ENCODE measurements at regions of chr1 and their contacts with region 1.

Region 1: GRCh38 chr1:153922972-153923925 is at the start of gene GATAD2B:
- DNase-seq: peak; percentile 100
- ATAC-seq: peak; percentile 97 to 99 (median 98)
- H3K4me3 ChIP-seq: peak within 1 kb of the TSS; percentile 67 to 93 (median 72)
- H3K27ac ChIP-seq: peak within 1 kb of the TSS; percentile 82 to 94 (median 90)
- H3K4me1 ChIP-seq: peaks cover 10 to 51% (median 40%) of the 10 kb centered on the region in 9 donors
- H3K27me3 ChIP-seq: no peaks in the 10 kb centered on the region
- CTCF ChIP-seq: no peak
- total RNA-seq, gene GATAD2B: 32.9 to 52.6 (median 42.7) TPM

Region 2: GRCh38 chr1:153727463-153728304 is 195.6 kb before region 1 on chr1 and contains the start of gene INTS3:
- intact Hi-C with region 1: no loop called
- DNase-seq: peak; percentile 99 to 100
- ATAC-seq: peak; percentile 99 to 100 (median 100)
- H3K4me3 ChIP-seq: peak within 1 kb of the TSS; percentile 48 to 92 (median 78)
- H3K27ac ChIP-seq: peak within 1 kb of the TSS; percentile 96 to 100 (median 99)
- H3K4me1 ChIP-seq: peaks cover 0 to 36% (median 30%) of the 10 kb centered on the region in 9 donors
- H3K27me3 ChIP-seq: no peaks in the 10 kb centered on the region
- CTCF ChIP-seq: peak in 3 of 9 donors; percentile 8 to 22 (median 15)
- total RNA-seq, gene INTS3: 25.4 to 32.8 (median 31.1) TPM

Region 3: DNA sequence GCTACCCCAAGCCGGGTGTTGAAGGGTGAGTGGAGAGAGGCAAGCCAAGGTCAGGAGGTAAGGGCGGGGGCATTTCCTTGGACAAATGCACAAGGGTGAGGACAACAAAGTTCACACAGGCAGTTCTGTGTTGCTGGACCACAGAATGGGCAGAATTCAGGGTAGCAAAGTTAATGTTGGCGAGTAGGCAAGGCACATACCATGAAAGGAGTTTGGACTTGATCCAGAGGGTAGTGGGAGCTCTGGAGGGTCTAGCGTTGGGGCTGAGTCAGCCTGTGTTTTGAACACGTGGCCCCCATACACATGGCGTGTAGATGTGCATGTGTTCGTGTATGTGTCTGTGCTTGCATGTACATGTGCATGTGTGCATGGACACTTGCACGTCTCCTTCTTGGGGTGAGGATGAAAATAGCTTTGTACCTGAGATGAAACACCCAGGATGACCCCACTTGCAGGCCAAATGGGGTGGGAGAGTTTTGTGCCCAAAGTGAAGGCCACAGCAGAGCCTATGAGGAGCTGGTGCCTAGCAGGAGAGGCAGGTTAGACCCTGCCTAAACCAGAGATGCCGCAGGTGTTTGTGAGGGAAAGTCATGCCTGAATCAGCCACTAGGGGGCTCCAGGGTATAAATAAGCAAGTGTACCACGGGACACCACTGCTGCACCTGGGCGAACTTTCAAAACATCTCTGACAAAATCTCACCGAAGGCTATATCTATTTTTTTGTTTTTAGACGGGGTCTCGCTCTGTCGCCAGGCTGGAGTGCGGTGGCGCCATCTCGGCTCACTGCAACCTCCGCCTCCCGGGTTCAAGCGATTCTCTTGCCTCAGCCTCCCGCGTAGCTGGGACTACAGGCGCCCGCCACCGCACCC is 126.2 kb before region 1 on chr1:
- intact Hi-C with region 1: loop called in 1 of 10 experiments (anchors 5 kb)
- DNase-seq: peak; percentile 53 to 84
- ATAC-seq: peak in 7 of 8 donors; percentile 51 to 76 (median 69)
- H3K4me3 ChIP-seq: no peak overlapping the region
- H3K27ac ChIP-seq: no peak overlapping the region
- H3K4me1 ChIP-seq: peaks cover 0 to 15% (median 0%) of the 10 kb centered on the region in 9 donors
- H3K27me3 ChIP-seq: no peaks in the 10 kb centered on the region
- CTCF ChIP-seq: peak; percentile 83 to 96 (median 92)

Region 4: DNA sequence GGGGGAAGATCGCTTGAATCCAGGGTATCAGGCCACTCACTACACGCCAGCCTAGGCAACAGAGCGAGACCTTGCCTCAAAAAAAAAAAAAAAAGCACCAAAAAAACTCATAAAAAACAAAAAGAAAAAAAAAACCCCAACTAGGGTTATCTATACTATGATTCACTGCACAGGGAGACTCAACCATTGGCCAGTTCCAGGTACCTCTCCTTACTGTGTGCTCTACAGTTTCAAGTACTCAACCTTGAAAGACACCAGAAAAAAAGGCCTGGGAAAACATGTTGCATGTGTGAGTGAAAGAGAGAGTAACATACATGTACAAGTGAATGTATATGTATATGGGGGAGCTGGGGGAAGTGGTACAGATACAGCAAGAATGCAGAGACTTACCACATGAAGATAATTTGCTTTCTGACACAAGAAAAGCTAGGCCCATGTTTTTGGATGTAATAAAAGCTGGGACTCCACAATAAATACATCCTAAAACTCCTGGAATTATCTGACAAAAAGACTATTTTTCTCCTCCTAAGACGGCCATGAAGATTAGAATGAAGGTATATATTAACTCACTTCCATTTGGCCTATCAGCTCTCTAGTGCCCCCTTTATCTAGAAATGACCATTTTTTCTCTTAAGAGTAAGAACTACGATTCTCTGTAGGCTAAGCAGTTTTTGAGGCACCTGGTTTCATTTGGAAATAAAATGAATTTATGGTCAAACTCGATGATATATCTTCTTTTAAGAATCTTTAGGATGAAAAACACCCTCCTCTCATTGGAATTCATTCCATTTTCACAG is 95.9 kb before region 1 on chr1:
- intact Hi-C with region 1: loop called in 2 of 10 experiments (anchors 5 to 10 kb)
- DNase-seq: no peak
- ATAC-seq: no peak
- H3K4me3 ChIP-seq: no peak overlapping the region
- H3K27ac ChIP-seq: no peak overlapping the region
- H3K4me1 ChIP-seq: peaks cover 0 to 20% (median 8%) of the 10 kb centered on the region in 9 donors
- H3K27me3 ChIP-seq: no peaks in the 10 kb centered on the region
- CTCF ChIP-seq: no peak

Region 5: DNA sequence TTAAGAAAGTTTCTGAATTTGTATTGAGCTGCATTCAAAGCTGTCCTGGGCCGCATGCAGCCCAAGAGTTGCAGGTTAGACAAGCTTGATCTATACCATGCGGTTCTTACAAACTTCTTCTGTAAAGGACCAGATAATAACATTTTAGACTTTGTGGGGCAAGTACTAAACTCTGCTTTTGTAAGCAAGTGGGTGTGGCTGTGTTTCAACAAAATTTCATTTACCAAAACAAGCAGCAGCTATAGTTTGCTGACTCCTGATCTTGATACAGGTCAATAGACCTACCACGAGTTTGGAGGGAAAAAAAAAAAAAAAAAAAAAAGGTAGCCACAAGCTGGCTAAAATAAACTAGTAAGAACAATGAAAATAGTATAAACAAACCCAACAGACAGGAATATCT is 47.9 kb before region 1 on chr1:
- intact Hi-C with region 1: loop called in 2 of 10 experiments (anchors 5 kb)
- DNase-seq: no peak
- ATAC-seq: no peak
- H3K4me3 ChIP-seq: no peak overlapping the region
- H3K27ac ChIP-seq: no peak overlapping the region
- H3K4me1 ChIP-seq: peaks cover 0 to 34% (median 20%) of the 10 kb centered on the region in 9 donors
- H3K27me3 ChIP-seq: no peaks in the 10 kb centered on the region
- CTCF ChIP-seq: no peak

Region 6: DNA sequence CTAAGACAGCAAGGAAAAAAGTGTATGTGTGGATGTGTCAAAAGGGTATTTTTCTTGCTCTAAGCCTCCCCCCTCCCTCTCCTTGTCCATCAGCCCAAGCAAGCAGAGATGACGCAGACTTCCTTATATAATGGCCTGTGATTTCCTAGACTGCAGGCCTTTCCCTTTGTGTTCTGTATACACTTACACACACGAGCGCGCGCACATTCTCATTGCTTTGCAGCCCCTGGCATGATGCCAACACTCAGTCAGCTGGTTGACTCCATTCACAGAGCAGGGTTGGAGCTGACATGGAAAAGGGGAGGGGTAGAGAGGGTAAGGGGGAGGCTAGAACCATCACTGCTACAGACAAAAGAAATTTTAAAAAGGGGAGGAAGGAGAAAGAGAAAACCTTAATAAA is 42.3 kb before region 1 on chr1:
- intact Hi-C with region 1: loop called in 2 of 10 experiments (anchors 5 kb)
- DNase-seq: peak; percentile 81 to 94
- ATAC-seq: peak; percentile 95 to 99 (median 97)
- H3K4me3 ChIP-seq: peak overlapping the region in 6 of 10 donors; percentile 12 to 36 (median 28)
- H3K27ac ChIP-seq: peak overlapping the region in 8 of 10 donors; percentile 44 to 64 (median 58)
- H3K4me1 ChIP-seq: peaks cover 5 to 47% (median 37%) of the 10 kb centered on the region in 9 donors
- H3K27me3 ChIP-seq: no peaks in the 10 kb centered on the region
- CTCF ChIP-seq: no peak

Region 7: DNA sequence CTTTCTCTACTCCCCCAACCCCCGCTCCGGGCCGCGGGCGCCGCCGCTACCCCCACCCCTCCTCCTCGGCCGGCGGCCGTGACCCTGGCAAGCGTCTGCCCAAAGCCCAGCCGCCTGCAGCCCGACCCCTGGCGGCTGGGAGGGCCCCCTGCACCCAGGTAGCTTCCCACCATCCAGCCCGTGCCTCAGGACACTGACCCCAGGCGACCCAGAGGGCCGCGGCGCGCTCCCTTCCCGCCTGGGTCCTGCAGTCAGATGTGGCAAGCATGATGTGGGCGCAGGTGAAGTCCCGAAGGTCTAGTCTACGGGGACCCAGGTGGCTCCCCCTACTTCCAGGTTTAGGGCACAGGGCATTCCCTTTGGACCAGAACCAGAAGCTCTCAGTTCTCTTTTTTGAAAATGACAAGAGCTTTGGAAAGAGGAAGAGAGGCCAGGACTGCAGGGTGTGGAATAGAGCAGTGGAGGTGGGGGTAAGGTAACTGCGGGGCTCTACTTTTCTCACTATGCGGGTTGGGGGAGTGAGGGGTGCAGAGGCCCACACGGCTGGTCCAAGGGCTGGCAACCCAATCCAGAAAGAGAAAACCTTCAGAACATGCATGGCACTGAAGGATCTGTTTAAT is 23.5 kb after region 1 on chr1 and contains the start of gene DENND4B:
- intact Hi-C with region 1: loop called in 3 of 10 experiments (anchors 2 kb)
- DNase-seq: peak; percentile 83 to 87
- ATAC-seq: peak; percentile 73 to 86 (median 78)
- H3K4me3 ChIP-seq: peak within 1 kb of the TSS; percentile 65 to 99 (median 91)
- H3K27ac ChIP-seq: peak within 1 kb of the TSS; percentile 97 to 100 (median 100)
- H3K4me1 ChIP-seq: peaks cover 5 to 44% (median 30%) of the 10 kb centered on the region in 9 donors
- H3K27me3 ChIP-seq: no peaks in the 10 kb centered on the region
- CTCF ChIP-seq: peak; percentile 89 to 98 (median 94)
- total RNA-seq, gene DENND4B: 29.4 to 60.4 (median 39.0) TPM

Region 8: GRCh38 chr1:153984123-153984894 is 61.1 kb after region 1 on chr1:
- intact Hi-C with region 1: loop called in 1 of 10 experiments (anchors 5 kb)
- DNase-seq: no peak
- ATAC-seq: no peak
- H3K4me3 ChIP-seq: peak overlapping the region in 5 of 10 donors; percentile 53 to 71 (median 64)
- H3K27ac ChIP-seq: peak overlapping the region in 7 of 10 donors; percentile 74 to 91 (median 89)
- H3K4me1 ChIP-seq: peaks cover 8 to 43% (median 19%) of the 10 kb centered on the region in 9 donors
- H3K27me3 ChIP-seq: no peaks in the 10 kb centered on the region
- CTCF ChIP-seq: no peak

Region 9: GRCh38 chr1:154014154-154014910 is 91.1 kb after region 1 on chr1:
- intact Hi-C with region 1: no loop called
- DNase-seq: no peak
- ATAC-seq: no peak
- H3K4me3 ChIP-seq: no peak overlapping the region
- H3K27ac ChIP-seq: no peak overlapping the region
- H3K4me1 ChIP-seq: no peaks in the 10 kb centered on the region
- H3K27me3 ChIP-seq: no peaks in the 10 kb centered on the region
- CTCF ChIP-seq: no peak

Region 10: DNA sequence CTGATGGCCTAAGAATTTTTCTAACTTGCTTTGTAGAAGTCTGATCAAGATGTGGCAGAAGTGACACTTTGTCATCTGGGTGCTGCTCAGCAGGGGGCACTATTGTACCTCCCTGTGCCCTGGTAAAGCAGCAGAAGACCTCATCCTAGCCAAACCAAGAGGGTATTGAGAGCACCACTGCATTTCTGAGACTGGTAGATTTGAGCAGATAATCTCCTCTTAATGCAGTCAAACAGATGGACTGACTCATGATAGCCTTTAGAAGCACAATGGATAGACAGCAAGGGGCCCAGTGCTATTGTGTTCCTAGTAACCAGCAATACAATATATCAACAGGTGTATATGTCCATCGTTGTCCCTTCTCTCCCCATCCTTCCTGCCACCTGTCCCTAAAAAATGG is 262.9 kb after region 1 on chr1:
- intact Hi-C with region 1: no loop called
- DNase-seq: no peak
- ATAC-seq: no peak
- H3K4me3 ChIP-seq: no peak overlapping the region
- H3K27ac ChIP-seq: no peak overlapping the region
- H3K4me1 ChIP-seq: peaks cover 5 to 24% (median 15%) of the 10 kb centered on the region in 9 donors
- H3K27me3 ChIP-seq: no peaks in the 10 kb centered on the region
- CTCF ChIP-seq: peak in 7 of 9 donors; percentile 28 to 67 (median 44)

Region 11: GRCh38 chr1:154442006-154442740 is 518.9 kb after region 1 on chr1:
- intact Hi-C with region 1: no loop called
- DNase-seq: no peak
- ATAC-seq: peak in 5 of 8 donors; percentile 45 to 69 (median 52)
- H3K4me3 ChIP-seq: no peak overlapping the region
- H3K27ac ChIP-seq: peak overlapping the region in 1 of 10 donors; percentile 7
- H3K4me1 ChIP-seq: peaks cover 0 to 39% (median 0%) of the 10 kb centered on the region in 9 donors
- H3K27me3 ChIP-seq: no peaks in the 10 kb centered on the region
- CTCF ChIP-seq: peak in 8 of 9 donors; percentile 21 to 54 (median 42)